A549 (cell line): ENCODE measurements at regions of chr5 and their contacts with region 1.

Region 1: GRCh38 chr5:142655339-142656267 is 30.3 kb downstream of the FGF1 start:
- DNase-seq: peak; percentile 71 to 81
- ATAC-seq: peak; percentile 95 to 98
- H3K4me3 ChIP-seq: no peak overlapping the region
- H3K27ac ChIP-seq: no peak overlapping the region
- H3K4me1 ChIP-seq: peaks cover 4% of the 10 kb centered on the region; the same call in 1 of the 3 replicates
- CTCF ChIP-seq: peak; percentile 98
- EP300 ChIP-seq: no peak
- POLR2A ChIP-seq: no peak
- RAD21 ChIP-seq: peak; percentile 97

Region 2: GRCh38 chr5:142605611-142606010 is 50.0 kb before region 1 on chr5:
- CTCF ChIA-PET with region 1: interaction called, 97 read pairs
- POLR2A ChIA-PET with region 1: no interaction called
- DNase-seq: no peak
- ATAC-seq: no peak
- H3K4me3 ChIP-seq: no peak overlapping the region
- H3K27ac ChIP-seq: no peak overlapping the region
- H3K4me1 ChIP-seq: peaks cover 28% of the 10 kb centered on the region
- CTCF ChIP-seq: no peak
- EP300 ChIP-seq: no peak
- POLR2A ChIP-seq: no peak
- RAD21 ChIP-seq: no peak

Region 3: DNA sequence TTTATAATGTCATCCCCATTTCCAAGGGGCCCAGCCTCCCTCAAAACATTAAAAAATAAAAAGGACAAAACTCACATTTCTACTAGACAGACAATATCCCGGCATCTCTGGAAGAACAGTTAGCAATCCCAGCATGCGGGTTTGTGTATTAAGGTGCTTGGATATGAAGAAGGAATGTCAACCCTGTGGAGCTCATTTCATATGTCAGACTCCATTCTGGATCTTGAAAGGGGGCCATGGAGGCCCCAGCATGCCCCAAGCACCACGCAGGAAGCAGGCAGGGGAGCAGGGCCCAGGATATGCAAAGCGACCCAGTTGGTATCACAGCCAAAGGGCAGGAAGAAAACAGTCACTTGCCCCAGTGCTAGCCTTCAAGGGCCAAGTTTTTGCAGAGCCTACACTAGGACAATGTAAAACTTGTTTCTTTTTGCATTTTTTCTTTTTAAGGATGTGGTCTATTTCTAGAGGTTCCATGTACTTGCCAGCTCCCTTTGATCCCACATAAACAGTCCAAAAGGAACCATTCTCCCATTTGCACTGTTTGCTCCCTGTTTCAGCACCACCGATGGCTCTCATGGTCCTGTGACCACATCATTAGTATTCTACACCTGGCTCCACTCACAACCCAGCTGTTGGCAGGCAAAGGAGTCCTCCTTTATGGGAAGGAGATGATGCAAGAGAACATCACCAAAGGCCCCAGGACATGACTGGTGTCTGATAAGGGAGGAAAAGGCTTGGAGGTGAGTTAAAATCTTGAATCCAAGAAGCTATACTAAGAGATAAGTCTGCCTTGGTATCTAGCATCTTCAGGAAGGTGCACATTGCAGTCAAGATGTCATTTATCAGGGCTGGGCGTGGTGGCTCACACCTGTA is 28.0 kb before region 1 on chr5:
- CTCF ChIA-PET with region 1: interaction called, 11 read pairs
- POLR2A ChIA-PET with region 1: no interaction called
- DNase-seq: no peak
- ATAC-seq: no peak
- H3K4me3 ChIP-seq: no peak overlapping the region
- H3K27ac ChIP-seq: no peak overlapping the region
- H3K4me1 ChIP-seq: no peaks in the 10 kb centered on the region
- CTCF ChIP-seq: no peak
- EP300 ChIP-seq: no peak
- POLR2A ChIP-seq: no peak
- RAD21 ChIP-seq: no peak

Region 4: DNA sequence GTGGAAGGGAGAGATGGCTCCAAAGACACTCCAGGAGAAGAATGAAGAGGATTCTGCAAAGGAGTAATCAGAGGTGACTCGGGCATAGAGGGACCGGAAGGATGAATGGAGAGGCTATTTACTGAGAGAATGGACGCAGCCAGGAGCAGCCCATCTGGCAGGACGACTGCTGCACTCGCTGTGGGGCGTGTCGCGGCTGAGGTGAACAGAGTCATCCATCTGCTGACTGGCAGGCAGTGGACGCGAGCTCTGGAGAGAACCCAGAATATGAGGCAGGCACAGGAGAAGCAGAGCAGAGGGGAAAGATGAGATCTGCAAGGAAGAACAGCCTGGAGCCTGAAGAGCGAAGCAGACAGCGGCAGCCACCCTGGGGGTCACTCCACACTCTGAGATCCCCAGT is 13.9 kb after region 1 on chr5:
- CTCF ChIA-PET with region 1: interaction called, 68 read pairs
- POLR2A ChIA-PET with region 1: no interaction called
- DNase-seq: no peak
- ATAC-seq: no peak
- H3K4me3 ChIP-seq: no peak overlapping the region
- H3K27ac ChIP-seq: no peak overlapping the region
- H3K4me1 ChIP-seq: peaks cover 4% of the 10 kb centered on the region; the same call in 1 of the 3 replicates
- CTCF ChIP-seq: no peak
- EP300 ChIP-seq: no peak
- POLR2A ChIP-seq: no peak
- RAD21 ChIP-seq: no peak

Region 5: DNA sequence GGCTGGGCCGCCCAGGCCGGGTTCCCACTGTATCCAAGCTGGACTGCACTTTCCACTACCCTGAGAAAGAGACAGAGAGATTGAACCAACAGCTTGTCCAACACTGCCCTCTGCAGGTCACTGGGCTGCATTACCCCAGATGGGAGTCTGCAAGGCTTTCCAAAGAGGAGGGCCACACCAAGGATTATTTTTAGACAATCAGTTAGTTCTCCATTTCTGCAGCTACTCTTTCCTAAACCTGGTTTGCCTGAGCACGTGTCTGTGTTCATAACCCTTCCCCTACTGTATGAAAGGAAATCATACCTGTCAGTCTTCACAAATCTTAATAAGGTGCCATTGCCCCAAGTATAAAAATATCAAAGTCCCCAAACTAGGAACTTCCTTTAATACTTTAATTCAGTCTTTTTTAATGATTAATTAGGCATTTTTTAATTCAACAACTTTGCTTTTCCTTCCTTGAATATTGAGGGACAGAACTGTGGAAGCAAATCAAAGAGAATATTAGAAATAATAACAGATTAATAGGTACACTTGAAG is 43.6 kb after region 1 on chr5:
- CTCF ChIA-PET with region 1: interaction called, 583 read pairs
- POLR2A ChIA-PET with region 1: interaction called, 7 read pairs
- DNase-seq: peak; percentile 76 to 78
- ATAC-seq: peak; percentile 96 to 98
- H3K4me3 ChIP-seq: no peak overlapping the region
- H3K27ac ChIP-seq: no peak overlapping the region
- H3K4me1 ChIP-seq: 0 out of 3 replicates have a peak, but pooled peaks cover 4% of the 10 kb centered on the region
- CTCF ChIP-seq: peak; percentile 97
- EP300 ChIP-seq: no peak
- POLR2A ChIP-seq: no peak
- RAD21 ChIP-seq: peak; percentile 99 to 100

Region 6: GRCh38 chr5:142900927-142901326 is 245.3 kb after region 1 on chr5:
- CTCF ChIA-PET with region 1: interaction called, 16 read pairs
- POLR2A ChIA-PET with region 1: no interaction called
- DNase-seq: no peak
- ATAC-seq: no peak
- H3K4me3 ChIP-seq: no peak overlapping the region
- H3K27ac ChIP-seq: no peak overlapping the region
- H3K4me1 ChIP-seq: no peaks in the 10 kb centered on the region
- CTCF ChIP-seq: no peak
- EP300 ChIP-seq: no peak
- POLR2A ChIP-seq: no peak
- RAD21 ChIP-seq: no peak